ENCODE measurements at regions of chr2 and their contacts with region 1.

Region 1: GRCh38 chr2:79887747-79888374 is 375.0 kb downstream of the CTNNA2 start:
- DNase-seq: peak; percentile 25
- H3K4me3 ChIP-seq: no peak overlapping the region
- H3K27ac ChIP-seq: no peak overlapping the region
- H3K4me1 ChIP-seq: no peaks in the 10 kb centered on the region
- H3K27me3 ChIP-seq: no peaks in the 10 kb centered on the region
- CTCF ChIP-seq: peak; percentile 43 to 61

Region 2: GRCh38 chr2:78351208-78351607 is 1536.7 kb before region 1 on chr2:
- CTCF ChIA-PET with region 1: no interaction called
- dilution Hi-C with region 1: no loop called
- in situ Hi-C with region 1: no loop called
- intact Hi-C with region 1: loop called (anchors 5 kb)
- DNase-seq: no peak
- H3K4me3 ChIP-seq: no peak overlapping the region
- H3K27ac ChIP-seq: no peak overlapping the region
- H3K4me1 ChIP-seq: no peaks in the 10 kb centered on the region
- H3K27me3 ChIP-seq: no peaks in the 10 kb centered on the region
- CTCF ChIP-seq: peak in 1 of 2 donors; percentile 10

Region 3: GRCh38 chr2:79223539-79223938 is 664.3 kb before region 1 on chr2:
- CTCF ChIA-PET with region 1: no interaction called
- dilution Hi-C with region 1: no loop called
- in situ Hi-C with region 1: no loop called
- intact Hi-C with region 1: loop called (anchors 10 kb)
- DNase-seq: no peak
- H3K4me3 ChIP-seq: no peak overlapping the region
- H3K27ac ChIP-seq: no peak overlapping the region
- H3K4me1 ChIP-seq: no peaks in the 10 kb centered on the region
- H3K27me3 ChIP-seq: no peaks in the 10 kb centered on the region
- CTCF ChIP-seq: no peak

Region 4: GRCh38 chr2:79649531-79649930 is 238.3 kb before region 1 on chr2:
- CTCF ChIA-PET with region 1: no interaction called
- dilution Hi-C with region 1: no loop called
- in situ Hi-C with region 1: no loop called
- intact Hi-C with region 1: no loop called
- DNase-seq: no peak
- H3K4me3 ChIP-seq: no peak overlapping the region
- H3K27ac ChIP-seq: no peak overlapping the region
- H3K4me1 ChIP-seq: no peaks in the 10 kb centered on the region
- H3K27me3 ChIP-seq: no peaks in the 10 kb centered on the region
- CTCF ChIP-seq: no peak

Region 5: DNA sequence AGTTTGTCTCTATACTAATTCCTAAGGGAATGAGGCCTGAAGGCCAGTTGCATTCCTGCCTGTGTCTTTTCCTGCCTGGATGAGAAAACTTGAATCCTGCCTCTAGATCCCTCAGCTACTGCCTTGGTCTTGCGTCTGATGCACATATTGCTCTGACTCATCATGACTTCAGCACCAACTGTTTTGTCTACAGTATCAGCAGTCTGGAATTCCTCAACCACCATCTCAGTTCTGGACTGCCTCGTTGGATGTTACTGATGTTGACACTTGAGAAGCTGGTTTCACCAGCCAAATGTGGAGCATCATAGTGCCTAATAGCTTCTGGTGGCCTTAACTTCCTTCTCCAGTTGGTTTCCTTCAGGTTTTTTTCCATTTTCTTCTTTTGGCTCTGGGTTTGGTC is 164.0 kb before region 1 on chr2:
- CTCF ChIA-PET with region 1: no interaction called
- dilution Hi-C with region 1: no loop called
- in situ Hi-C with region 1: no loop called
- intact Hi-C with region 1: no loop called
- DNase-seq: no peak
- H3K4me3 ChIP-seq: no peak overlapping the region
- H3K27ac ChIP-seq: no peak overlapping the region
- H3K4me1 ChIP-seq: no peaks in the 10 kb centered on the region
- H3K27me3 ChIP-seq: no peaks in the 10 kb centered on the region
- CTCF ChIP-seq: no peak